Left ventricle myocardium superior (tissue), 1 donor: ENCODE measurements at regions of chr2 and their contacts with region 1.

Region 1: DNA sequence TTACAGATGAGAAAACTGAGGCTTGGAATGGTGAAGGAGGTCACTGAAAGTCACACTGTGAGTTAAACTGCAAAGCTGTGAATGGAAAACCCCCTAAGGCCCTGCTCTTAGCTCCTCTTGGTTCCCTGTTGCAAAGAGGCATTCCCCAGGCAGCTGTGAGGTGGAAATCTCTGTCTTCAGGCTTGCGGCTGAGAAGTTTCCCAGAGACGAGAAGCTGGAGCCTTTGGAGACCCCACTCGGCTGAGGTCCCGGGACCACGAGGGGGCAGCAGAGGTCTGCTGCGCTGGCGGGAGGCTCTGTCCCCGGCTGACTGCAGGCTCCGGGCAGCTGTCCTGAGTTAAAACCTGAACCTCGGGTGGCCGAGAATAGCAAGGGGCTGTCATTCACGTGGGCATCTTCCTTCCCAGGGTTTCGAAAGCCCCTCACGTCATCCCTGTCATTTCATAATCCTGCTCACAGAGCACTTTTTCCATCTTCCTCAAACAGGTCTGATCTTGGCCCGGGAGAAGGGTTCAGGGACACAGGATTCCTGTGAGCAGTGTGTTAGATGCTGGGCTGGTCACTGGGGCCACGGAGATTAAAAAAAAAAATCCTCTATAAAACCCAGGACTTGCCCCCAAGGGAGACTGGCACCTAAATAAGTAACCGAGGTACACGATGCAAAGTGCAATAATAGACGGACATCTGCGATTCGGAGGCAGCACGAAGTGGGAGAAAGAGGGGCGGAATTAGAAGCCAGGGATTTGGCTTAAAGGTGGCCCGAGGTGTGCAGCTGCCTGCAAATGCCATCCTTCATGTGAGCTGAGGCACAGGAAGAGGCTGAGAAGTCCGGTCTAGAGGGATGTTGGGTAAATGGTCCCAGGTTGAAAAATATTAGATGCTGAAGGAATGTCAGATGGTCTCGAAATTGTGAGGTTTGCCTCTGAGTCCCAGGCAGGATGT is 24.6 kb upstream of the ATOH8 start:
- DNase-seq: peak; percentile 95
- ATAC-seq: peak; percentile 95

Region 2: GRCh38 chr2:85813982-85814801 is 85.0 kb after region 1 on chr2:
- intact Hi-C with region 1: loop called (anchors 5 kb)
- DNase-seq: peak; percentile 95
- ATAC-seq: peak; percentile 96